GM18951 (cell line): ENCODE measurements at regions of chr11 and their contacts with region 1.

Region 1: GRCh38 chr11:59207988-59208451 is 4.7 kb downstream of the MPEG1 start:
- POLR2A ChIP-seq: peak; percentile 11

Region 2: DNA sequence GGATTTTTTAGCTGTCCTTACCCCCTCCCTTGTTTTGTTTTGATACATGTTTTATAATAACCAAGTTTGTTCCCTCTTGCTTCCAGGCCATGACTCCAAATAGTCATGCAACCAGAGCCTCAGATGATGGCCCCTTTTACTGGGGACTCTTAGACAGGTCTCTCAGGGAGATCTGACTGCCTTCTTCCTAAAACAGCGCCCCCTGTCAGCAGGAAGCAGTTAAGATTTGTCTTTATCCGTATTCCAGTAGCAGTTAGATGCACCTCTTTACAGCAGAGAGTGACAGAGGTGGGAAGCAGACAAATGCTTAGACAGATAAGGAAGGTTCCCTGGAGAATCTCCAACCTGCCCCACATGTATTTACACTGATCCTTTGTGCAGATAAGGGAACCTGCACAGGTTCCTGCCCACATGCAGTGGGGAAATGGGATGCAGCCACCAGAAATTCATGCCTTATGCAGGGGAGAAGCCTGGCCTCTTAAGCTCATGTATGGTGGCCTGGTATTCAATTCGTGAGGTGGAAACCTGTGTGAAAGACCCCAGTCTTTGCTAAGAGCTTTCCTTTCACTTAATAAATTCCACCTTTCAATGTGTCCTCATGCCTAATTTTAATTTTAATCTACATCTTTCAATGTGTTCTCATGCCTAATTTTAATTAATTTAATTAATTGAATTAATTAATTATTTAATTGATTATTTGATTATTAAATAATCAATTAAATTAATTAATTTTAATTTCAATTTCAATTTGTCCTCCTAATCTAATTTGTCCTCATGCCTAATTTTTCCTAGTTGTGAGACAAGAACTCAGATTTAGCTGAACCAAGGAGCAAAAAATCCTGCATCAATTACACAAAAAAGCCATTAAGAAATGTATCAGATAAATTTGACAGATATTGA is 464.8 kb before region 1 on chr11:
- in situ Hi-C with region 1: no loop called
- POLR2A ChIP-seq: no peak

Region 3: GRCh38 chr11:58980159-58980843 is 227.7 kb before region 1 on chr11:
- in situ Hi-C with region 1: no loop called
- POLR2A ChIP-seq: no peak

Region 4: DNA sequence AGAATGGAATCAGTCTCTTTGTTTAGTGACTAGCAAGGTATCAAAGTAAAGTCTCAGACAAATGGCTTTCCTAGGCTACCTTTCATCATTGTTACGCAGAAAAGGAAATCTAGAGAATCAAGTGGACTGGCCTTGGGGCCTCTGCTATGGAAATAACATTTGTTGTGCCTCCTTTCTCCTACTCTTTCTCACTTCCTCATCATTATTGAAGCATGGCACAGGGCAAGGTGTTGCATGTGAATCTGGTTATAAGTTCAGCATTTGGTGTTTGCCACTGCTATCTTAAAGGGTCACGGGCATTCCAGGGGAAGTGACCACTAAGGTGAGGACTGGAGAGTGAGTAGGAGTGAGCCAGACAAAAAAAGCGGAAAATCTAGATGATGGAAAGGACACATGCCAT is 213.8 kb before region 1 on chr11:
- in situ Hi-C with region 1: no loop called
- POLR2A ChIP-seq: no peak

Region 5: DNA sequence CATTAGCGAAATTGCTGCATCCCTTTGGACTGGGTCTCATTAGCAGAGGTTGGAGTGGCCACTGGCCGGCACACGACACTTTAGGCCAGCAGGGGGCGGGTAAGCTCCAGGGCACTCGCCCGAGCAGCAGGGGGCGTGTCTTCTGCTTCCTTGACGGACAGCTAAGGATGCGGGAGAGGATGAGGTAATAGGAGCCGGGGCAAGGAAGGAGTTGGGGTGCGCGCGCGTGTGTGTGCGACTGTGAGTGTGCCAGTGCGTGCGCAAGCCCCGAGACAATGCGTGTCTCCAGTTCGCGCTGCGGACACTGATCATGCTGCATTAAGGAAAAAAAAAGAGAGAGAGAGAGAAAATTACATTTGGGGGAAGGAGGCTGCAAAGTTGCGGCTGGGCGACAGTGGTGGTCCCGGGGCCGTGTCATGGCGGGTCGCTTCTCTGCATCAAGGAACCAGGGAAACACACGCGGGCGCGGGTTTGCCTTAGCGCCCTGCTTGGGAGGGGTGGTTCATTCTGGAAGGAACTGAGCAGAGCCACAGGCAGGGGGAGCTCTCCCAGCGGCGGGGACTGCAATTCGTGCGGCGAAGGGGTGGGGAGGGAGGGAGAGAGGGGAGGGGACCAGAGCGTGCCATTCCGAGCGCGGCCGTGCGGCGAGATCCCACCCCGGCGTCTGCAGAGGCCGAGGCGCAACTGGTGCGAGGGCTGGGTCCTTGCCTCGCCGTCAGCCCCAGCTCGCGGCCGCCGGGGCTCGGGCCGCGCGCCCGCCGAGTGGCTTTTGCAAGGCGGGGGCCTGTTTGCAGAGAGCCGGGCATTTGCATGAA is 36.3 kb before region 1 on chr11 and contains the start of gene DTX4:
- in situ Hi-C with region 1: loop called (anchors 5 kb)
- POLR2A ChIP-seq: peak; percentile 45